B cell (primary cell): ENCODE measurements at regions of chr19 and their contacts with region 1.

Region 1: DNA sequence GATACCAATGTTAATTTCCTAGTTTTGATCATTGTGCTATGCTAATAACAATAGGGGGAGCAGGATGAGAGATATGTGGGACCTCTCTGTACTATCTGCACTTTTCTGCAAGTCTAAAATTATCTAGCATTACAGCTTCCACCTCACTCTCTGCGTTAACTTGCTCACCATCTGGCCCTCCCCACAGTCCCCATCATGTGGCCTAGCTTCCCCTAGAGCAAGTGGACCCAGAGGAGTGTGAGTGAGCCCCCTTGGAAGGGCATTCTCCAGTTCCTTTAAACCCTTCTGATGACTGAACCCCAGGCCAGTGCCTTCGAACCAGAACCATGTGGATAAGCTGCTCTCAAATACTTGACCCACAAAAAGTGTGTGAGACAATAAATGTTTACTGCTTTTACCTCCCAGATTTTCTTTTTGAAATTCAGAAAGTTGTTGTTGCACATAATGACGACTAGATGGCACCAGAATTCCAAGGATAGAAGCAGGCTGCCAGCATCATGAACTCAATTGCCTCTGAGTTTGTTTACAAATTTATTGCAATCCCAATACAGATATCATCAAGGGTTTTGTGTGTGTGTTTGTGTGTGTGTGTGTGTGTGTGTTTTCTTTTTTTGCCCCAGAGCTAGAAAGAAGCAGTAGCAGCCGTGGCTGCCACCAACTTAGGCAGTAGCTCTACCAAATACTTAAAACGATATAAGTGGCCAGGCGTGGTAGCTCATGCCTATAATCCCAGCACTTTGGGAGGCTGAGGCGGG is 49.0 kb upstream of the ZNF780A start:
- DNase-seq: peak; percentile 73
- ATAC-seq: no peak
- H3K4me3 ChIP-seq: no peak overlapping the region
- H3K4me3 Mint-ChIP-seq: no peak overlapping the region
- H3K27ac ChIP-seq: no peak overlapping the region
- H3K27ac Mint-ChIP-seq: peak overlapping the region; percentile 46
- H3K4me1 ChIP-seq: peaks cover 23 to 26% of the 10 kb centered on the region in 2 donors
- H3K4me1 Mint-ChIP-seq: peaks cover 30% of the 10 kb centered on the region
- H3K27me3 ChIP-seq: no peaks in the 10 kb centered on the region
- H3K27me3 Mint-ChIP-seq: peaks cover 10% of the 10 kb centered on the region
- CTCF ChIP-seq: peak; percentile 81

Region 2: GRCh38 chr19:40165362-40165937 is 25.7 kb after region 1 on chr19:
- CTCF ChIA-PET with region 1: interaction called, 16 read pairs
- POLR2A ChIA-PET with region 1: interaction called, 5 read pairs
- intact Hi-C with region 1: no loop called
- DNase-seq: peak; percentile 65
- ATAC-seq: peak; percentile 52
- H3K4me3 ChIP-seq: no peak overlapping the region
- H3K4me3 Mint-ChIP-seq: peak overlapping the region; percentile 61
- H3K27ac ChIP-seq: no peak overlapping the region
- H3K27ac Mint-ChIP-seq: peak overlapping the region; percentile 67
- H3K4me1 ChIP-seq: peaks cover 27 to 38% of the 10 kb centered on the region in 2 donors
- H3K4me1 Mint-ChIP-seq: peaks cover 25% of the 10 kb centered on the region
- H3K27me3 ChIP-seq: no peaks in the 10 kb centered on the region
- H3K27me3 Mint-ChIP-seq: no peaks in the 10 kb centered on the region
- CTCF ChIP-seq: peak; percentile 71

Region 3: DNA sequence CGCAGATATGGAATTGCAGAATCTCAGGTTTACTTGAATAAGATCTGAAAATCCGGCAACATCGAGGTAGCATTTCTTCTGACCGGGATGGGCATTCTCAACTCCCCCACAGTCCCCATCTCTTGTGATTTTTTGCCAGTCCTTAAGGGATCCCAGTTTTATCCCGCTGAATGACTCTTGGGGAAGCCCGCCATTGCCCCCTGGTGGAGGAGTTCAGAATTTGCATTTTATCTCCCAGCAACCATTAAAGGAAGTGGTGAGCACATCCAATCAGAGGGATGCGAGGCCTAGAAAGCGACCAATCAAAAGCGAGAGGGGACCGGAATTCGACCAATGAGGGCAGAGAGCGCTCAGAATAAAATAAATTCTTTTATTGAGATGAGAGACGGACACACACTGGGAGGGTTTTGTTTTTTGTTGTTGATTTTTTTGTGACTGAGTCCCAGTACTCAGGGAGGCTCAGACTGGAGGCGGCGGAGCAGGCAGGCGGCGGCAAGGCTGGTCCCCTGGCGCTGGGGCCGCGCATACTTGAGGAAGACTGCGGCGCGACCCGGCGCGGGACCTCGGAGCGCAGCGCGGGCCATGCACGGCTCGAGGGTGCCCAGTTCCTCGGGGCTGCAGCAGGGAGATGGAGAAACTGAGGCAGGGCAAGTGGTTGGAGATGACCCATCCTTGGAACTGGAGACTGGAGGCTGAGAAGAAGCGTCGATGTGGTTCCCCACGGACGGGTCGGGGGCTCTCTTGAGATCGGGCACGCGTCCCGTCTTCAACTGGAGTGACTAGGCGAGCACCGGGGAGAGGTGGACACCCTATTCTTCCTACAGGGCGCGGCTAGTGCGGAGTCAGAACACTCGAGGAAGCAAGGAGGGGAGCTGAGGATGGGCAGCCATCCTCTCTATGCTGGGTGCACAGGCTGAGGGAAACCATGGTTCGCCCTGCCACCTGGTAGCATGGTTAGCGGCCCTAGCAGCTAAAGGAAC is 82.4 kb after region 1 on chr19:
- CTCF ChIA-PET with region 1: interaction called, 26 read pairs
- POLR2A ChIA-PET with region 1: no interaction called
- intact Hi-C with region 1: loop called (anchors 1 kb)
- DNase-seq: peak; percentile 89
- ATAC-seq: peak; percentile 84
- H3K4me3 ChIP-seq: no peak overlapping the region
- H3K4me3 Mint-ChIP-seq: no peak overlapping the region
- H3K27ac ChIP-seq: no peak overlapping the region
- H3K27ac Mint-ChIP-seq: peak overlapping the region; percentile 1
- H3K4me1 ChIP-seq: peaks cover 30 to 42% of the 10 kb centered on the region in 2 donors
- H3K4me1 Mint-ChIP-seq: peaks cover 18% of the 10 kb centered on the region
- H3K27me3 ChIP-seq: peaks cover 0 to 65% (median 37%) of the 10 kb centered on the region in 4 experiments
- H3K27me3 Mint-ChIP-seq: peaks cover 45% of the 10 kb centered on the region
- CTCF ChIP-seq: peak; percentile 86

Region 4: GRCh38 chr19:40312533-40312932 is 172.8 kb after region 1 on chr19:
- CTCF ChIA-PET with region 1: no interaction called
- POLR2A ChIA-PET with region 1: interaction called, 3 read pairs
- intact Hi-C with region 1: loop called (anchors 5 kb)
- DNase-seq: no peak
- ATAC-seq: no peak
- H3K4me3 ChIP-seq: no peak overlapping the region
- H3K4me3 Mint-ChIP-seq: no peak overlapping the region
- H3K27ac ChIP-seq: no peak overlapping the region
- H3K27ac Mint-ChIP-seq: no peak overlapping the region
- H3K4me1 ChIP-seq: no peaks in the 10 kb centered on the region
- H3K4me1 Mint-ChIP-seq: no peaks in the 10 kb centered on the region
- H3K27me3 ChIP-seq: no peaks in the 10 kb centered on the region
- H3K27me3 Mint-ChIP-seq: no peaks in the 10 kb centered on the region
- CTCF ChIP-seq: no peak